ENCODE measurements at regions of chr2 and their contacts with region 1.

Region 1: DNA sequence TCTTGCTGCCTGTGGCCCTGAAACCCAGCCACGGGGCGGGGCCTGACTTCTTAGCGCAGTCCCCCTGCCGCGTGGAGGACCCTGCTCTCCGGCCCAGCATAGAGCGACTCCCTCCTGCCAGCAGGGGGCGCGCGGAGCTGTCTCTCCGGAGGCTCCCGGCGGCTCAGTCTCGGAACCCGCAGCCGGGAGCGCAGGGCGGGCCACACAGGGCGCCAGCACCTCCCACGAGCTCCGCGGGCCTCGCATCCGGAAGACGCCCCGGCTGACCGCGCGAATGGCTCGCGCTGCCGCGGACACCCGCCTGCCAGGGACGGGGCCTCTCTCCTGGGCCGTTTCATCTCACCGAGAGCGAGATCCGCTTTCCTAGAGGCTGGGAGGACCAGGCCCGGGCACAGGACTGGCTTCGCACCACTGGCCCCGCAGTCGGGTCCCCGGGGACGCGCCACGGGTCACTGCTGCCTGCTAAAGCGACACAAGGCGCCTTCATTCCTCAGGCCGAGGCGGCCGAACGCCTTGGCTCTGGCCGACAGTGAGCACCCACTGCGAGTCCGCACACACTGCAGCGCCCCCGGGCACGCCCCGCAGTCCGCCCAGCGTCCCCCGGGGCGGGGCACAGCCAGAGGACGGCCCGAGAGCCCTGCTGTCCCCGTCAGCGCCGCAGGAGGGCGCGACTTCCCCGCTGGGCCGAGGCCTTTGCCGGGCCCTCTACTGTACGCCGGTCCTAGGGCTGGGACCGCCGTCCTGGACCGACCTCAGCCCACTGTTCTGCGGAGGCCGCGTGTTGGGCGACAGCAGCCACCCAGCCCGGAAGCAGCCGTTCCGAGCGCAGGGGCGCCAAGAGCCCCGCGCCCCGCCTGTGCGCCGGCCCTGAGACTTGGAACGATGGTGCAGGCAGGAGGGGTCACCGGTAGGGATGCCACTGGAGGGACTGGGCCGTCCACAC is 39.0 kb upstream of the ARHGEF4 start:
- DNase-seq: peak; percentile 86
- H3K4me3 Mint-ChIP-seq: peak overlapping the region; percentile 58
- H3K27ac Mint-ChIP-seq: no peak overlapping the region
- H3K4me1 Mint-ChIP-seq: no peaks in the 10 kb centered on the region
- H3K27me3 Mint-ChIP-seq: peaks cover 13% of the 10 kb centered on the region

Region 2: DNA sequence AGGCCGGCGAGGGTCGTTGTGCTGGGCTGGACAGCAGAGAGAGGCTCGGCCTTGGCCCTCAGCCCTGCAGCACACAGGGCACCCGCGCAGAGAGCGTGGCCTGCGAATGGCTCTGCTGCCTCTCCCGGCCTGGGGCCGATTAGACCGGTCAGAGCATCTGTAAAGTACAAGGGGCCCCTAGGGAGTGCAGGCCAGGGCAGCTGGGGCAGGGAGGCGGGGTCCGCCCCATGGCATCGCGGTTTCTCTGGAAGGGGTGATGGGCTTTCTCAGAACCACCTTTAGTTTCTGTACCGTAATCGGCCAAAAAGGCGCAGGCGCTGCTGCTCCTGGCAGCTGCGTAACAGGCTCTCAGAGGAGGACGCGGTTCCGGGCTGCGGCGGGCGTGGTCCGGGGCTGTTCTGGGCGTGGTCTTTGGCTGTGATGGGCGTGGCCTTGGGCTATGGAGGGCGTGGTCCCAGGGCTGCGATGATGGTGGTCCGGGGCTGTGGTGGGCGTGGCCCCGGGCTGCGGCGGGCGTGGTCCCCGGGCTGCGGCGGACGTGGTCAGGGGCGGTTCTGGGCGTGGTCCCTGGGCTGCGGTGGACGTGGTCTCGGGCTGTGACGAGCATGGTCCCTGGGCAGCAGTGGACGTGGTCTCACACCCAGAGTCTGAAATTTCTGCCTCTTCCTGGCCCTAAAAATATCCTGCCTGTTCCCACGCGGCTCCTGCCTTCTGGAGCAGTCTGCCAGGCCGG is 70.3 kb before region 1 on chr2:
- intact Hi-C with region 1: loop called (anchors 5 kb)
- DNase-seq: peak; percentile 87
- H3K4me3 Mint-ChIP-seq: peak overlapping the region; percentile 75
- H3K27ac Mint-ChIP-seq: peak overlapping the region; percentile 34
- H3K4me1 Mint-ChIP-seq: peaks cover 7% of the 10 kb centered on the region
- H3K27me3 Mint-ChIP-seq: peaks cover 12% of the 10 kb centered on the region

Region 3: GRCh38 chr2:130824492-130825061 is 26.8 kb after region 1 on chr2:
- intact Hi-C with region 1: loop called (anchors 1 kb)
- DNase-seq: peak; percentile 71
- H3K4me3 Mint-ChIP-seq: peak overlapping the region; percentile 43
- H3K27ac Mint-ChIP-seq: peak overlapping the region; percentile 87
- H3K4me1 Mint-ChIP-seq: peaks cover 29% of the 10 kb centered on the region
- H3K27me3 Mint-ChIP-seq: peaks cover 7% of the 10 kb centered on the region

Region 4: GRCh38 chr2:130873700-130874346 is 76.1 kb after region 1 on chr2:
- intact Hi-C with region 1: loop called (anchors 1 kb)
- DNase-seq: peak; percentile 49
- H3K4me3 Mint-ChIP-seq: no peak overlapping the region
- H3K27ac Mint-ChIP-seq: no peak overlapping the region
- H3K4me1 Mint-ChIP-seq: no peaks in the 10 kb centered on the region
- H3K27me3 Mint-ChIP-seq: peaks cover 6% of the 10 kb centered on the region

Region 5: DNA sequence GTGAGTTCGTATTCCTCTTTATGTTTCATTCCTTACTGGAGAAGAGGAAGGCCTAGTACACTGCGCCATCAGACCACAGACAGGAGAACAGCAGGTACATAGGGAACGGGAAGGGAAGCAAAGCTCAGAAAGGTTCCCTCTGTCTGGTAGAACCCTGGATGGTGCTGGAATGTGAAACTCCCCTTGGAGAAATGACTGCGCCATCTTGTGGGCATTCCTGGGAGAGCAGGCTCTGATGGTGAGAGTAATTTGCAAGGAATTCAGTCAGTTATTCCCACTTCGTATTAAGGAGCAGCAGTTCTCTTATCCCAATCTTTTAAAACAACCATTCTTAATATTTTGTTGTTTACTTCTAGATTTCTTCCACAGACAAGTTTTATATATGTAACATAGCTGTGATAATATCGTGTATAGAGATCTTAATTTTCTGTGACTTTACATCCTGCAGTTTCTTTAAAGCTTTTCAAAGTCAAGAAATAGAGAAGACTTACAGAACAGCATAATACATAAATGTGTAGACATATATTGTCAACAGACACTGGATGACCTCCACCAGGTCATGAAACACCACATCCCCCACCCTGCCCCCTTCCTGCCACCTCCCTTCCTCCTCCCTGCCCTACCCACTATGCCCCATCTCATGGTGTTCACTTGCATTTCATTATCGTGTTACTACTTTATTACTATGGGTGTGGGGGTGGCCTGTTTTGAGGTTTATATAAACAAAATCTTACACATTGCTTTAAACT is 122.8 kb after region 1 on chr2:
- intact Hi-C with region 1: loop called (anchors 1 kb)
- DNase-seq: no peak
- H3K4me3 Mint-ChIP-seq: no peak overlapping the region
- H3K27ac Mint-ChIP-seq: no peak overlapping the region
- H3K4me1 Mint-ChIP-seq: no peaks in the 10 kb centered on the region
- H3K27me3 Mint-ChIP-seq: no peaks in the 10 kb centered on the region

Measured in activated T-helper 2 cell treated with anti-CD3 and anti-CD28 coated beads, Interferon-gamma antibody, Interleukin-2, Interleukin-4, amounts not matched to agents 10 μg/mL and 5 μg/mL and 100 μg/mL, durations not matched to agents 14 hours and 24 hours and 36 hours (primary cell).